Right ventricle myocardium inferior (tissue), 1 donor: ENCODE measurements at regions of chr5 and their contacts with region 1.

Region 1: GRCh38 chr5:39074016-39074886 is at the start of gene RICTOR:
- DNase-seq: peak; percentile 97
- ATAC-seq: peak; percentile 97
- total RNA-seq, gene RICTOR: 26.0 TPM

Region 2: DNA sequence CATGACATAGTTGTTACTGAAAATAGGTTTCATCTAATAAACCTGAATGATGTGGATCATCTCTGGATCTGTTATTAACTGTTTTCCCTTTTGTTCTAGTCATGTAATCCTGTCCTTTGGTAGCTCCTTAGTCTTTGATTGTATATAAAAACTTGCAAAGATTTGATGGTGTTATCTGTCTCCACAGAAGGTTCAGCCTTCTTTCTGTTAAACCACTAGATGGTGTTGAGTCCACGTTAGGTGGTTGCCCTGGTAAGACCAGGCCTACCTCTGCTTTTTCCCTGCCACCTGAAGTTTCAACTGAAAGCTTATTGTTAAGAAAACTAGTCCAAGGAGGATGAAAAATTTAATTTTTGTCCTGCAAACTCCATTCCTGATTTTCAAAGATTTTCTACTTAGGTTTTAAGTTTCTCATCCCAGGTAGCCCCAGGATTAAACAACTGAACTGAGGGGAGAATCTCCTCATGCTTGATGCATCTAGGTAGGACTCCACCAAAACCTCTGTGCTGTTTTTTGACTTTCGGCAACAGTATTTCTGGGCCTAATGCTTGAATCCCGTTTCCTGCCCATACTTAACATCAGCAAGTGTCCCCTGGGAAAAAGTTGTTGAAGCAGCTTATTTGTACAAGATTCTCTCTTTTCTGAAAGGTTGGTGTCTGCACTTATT is 68.6 kb before region 1 on chr5:
- intact Hi-C with region 1: loop called (anchors 2 kb)
- DNase-seq: no peak
- ATAC-seq: peak; percentile 60

Region 3: GRCh38 chr5:39015743-39016586 is 58.3 kb before region 1 on chr5:
- intact Hi-C with region 1: loop called (anchors 5 kb)
- DNase-seq: no peak
- ATAC-seq: peak; percentile 65